GM18951 (cell line): ENCODE measurements at regions of chr6 and their contacts with region 1.

Region 1: DNA sequence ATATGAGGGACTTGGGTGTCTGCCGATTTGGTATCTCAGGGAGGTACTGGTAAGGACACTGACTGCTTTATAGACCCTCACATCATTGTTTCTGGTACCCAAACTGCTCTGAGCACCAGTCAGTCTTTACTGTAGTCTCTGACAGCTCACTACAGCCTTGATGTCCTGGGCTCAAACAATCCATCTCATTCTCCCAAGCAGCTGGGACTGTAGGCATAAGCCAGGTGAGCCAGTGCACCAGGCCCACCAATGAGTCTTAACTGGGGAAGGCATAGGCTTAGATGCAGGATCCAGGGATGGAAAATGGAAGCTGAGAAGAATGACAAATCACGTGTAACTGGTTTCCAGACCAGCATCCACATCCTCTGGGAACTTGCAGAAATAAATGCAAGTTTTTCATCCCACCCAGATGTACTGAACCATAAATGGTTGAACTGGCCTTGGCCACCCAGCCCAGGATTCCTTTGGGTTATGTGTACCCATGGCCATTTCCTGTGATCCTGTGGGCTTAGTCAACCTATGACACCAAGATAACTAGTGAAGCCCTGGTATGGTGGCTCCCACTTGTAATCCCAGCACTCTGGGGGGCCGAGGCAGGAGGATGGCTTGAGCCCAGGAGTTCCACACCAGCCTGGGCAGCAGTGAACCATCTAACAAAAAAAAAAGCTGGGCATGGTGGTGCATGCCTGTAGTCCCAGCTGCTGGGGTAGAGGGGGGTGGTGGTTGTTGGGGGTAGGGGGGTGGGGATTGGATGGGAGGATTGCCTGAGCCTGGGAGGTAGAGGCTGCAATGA is 5.8 kb downstream of the TUBB start:
- POLR2A ChIP-seq: peak; percentile 52

Region 2: GRCh38 chr6:30672445-30673253 is 53.3 kb before region 1 on chr6 and contains the start of gene DHX16:
- in situ Hi-C with region 1: loop called (anchors 5 kb)
- POLR2A ChIP-seq: peak; percentile 83